Calu3 (cell line): ENCODE measurements at regions of chr10 and their contacts with region 1.

Region 1: GRCh38 chr10:27223964-27224363 is 16.6 kb downstream of the ACBD5 start:
- DNase-seq: peak; percentile 53
- H3K4me3 Mint-ChIP-seq: no peak overlapping the region
- H3K27ac Mint-ChIP-seq: no peak overlapping the region
- H3K4me1 Mint-ChIP-seq: no peaks in the 10 kb centered on the region
- H3K27me3 Mint-ChIP-seq: no peaks in the 10 kb centered on the region
- CTCF ChIP-seq: peak; percentile 55

Region 2: DNA sequence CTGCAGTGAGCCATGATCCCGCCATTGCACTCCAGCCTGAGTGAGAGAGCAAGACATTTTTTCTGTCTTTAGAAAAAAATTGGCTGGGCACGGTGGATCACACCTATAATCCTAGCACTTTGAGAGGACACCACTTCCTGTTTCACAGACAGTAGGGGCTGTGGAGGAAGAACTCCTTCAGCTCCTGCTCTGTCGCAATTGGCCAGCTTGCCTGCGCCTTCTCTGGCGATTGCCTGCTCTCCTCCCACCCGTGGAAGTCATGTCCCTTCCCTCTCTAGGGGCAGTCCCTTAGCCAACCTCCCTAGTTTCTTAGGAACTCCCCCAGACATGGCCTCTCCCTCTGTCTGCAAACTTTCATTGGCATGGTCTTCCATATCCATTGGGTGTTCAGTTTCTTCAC is 517.8 kb before region 1 on chr10:
- CTCF ChIA-PET with region 1: no interaction called
- intact Hi-C with region 1: no loop called
- DNase-seq: no peak
- H3K4me3 Mint-ChIP-seq: no peak overlapping the region
- H3K27ac Mint-ChIP-seq: no peak overlapping the region
- H3K4me1 Mint-ChIP-seq: peaks cover 20% of the 10 kb centered on the region
- H3K27me3 Mint-ChIP-seq: no peaks in the 10 kb centered on the region
- CTCF ChIP-seq: no peak

Region 3: GRCh38 chr10:27285108-27285507 is 61.1 kb after region 1 on chr10:
- CTCF ChIA-PET with region 1: no interaction called
- intact Hi-C with region 1: loop called (anchors 2 kb)
- DNase-seq: peak; percentile 36
- H3K4me3 Mint-ChIP-seq: no peak overlapping the region
- H3K27ac Mint-ChIP-seq: no peak overlapping the region
- H3K4me1 Mint-ChIP-seq: peaks cover 11% of the 10 kb centered on the region
- H3K27me3 Mint-ChIP-seq: no peaks in the 10 kb centered on the region
- CTCF ChIP-seq: no peak

Region 4: GRCh38 chr10:27360581-27361172 is 136.7 kb after region 1 on chr10:
- CTCF ChIA-PET with region 1: interaction called, 8 read pairs
- intact Hi-C with region 1: loop called (anchors 2 kb)
- DNase-seq: peak; percentile 83
- H3K4me3 Mint-ChIP-seq: no peak overlapping the region
- H3K27ac Mint-ChIP-seq: no peak overlapping the region
- H3K4me1 Mint-ChIP-seq: no peaks in the 10 kb centered on the region
- H3K27me3 Mint-ChIP-seq: no peaks in the 10 kb centered on the region
- CTCF ChIP-seq: peak; percentile 76